ENCODE measurements at regions of chr5 and their contacts with region 1.

Region 1: DNA sequence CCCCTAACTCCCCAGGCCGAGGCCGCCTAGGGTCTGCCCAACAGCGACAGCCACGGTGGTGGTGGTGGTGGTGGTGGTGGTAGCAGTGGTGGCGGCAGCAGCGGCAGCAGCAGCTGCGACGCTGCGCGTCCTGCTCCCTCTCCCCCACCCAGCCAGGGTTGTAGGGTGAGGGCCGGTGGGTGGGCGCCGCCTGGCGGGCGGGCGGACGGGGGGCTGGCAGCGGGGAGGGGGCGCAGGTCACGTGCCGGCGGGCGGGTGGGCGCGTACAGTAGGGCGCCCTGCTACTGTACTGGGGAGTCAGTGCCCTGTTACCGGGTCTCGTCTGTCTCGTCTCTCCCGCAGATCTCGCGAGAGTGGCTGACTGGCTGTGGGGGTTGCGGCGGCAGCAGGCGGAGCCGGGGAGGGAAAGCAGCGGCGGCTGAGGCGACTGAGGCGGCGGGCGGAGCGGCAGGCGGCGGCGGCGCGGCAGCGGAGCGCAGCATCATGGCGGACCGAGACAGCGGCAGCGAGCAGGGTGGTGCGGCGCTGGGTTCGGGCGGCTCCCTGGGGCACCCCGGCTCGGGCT is at the start of gene PURA:
- DNase-seq: peak; percentile 99
- H3K4me3 Mint-ChIP-seq: peak within 1 kb of the TSS; percentile 92
- H3K27ac Mint-ChIP-seq: peak within 1 kb of the TSS; percentile 96
- H3K4me1 Mint-ChIP-seq: peaks cover 58% of the 10 kb centered on the region
- H3K27me3 Mint-ChIP-seq: peaks cover 34% of the 10 kb centered on the region
- total RNA-seq, gene PURA: 11.1 and 12.0 TPM in 2 replicates

Region 2: DNA sequence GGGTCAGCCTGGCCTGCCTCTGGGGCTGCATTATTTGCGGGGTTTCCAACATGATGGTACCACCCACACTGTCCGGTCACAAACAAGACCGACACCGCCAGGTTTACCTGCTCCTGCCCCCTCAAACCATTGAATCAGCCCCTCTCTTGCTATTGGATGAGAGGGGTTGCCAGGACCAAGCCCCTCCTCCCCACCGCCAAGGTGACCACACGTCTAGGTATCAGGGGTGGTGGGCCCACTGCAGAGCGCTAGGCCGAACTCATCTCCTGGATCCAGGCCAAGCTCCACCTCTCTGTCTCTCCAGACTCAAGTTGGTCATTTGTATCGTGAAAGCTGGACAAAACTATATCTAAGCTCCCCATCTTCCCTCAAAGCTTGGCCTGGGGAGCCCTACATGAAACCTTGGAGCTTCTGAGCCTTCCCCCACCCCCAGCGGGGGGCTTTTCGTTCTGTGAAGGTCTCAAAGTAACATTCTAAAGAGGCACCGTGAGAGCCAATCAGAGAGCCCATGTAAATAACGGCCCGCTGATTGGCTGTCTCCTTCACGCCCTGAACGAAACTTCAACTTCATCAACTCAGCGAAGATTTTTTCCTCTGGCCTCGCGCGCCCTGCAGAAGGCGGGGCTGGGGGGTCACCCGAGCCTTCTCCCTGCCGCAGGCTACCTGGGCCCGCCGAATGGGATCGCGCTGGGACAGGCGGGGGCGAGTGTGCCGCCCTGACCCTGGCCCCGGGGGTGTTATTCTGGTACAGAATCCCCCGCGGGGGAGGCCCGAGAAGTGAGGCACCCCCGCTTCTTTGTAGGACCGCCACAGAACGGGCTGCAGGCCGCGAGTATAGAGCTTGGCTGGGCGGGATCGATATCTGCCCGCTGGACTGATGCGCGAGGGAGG is 367.7 kb before region 1 on chr5:
- intact Hi-C with region 1: loop called (anchors 10 kb)
- DNase-seq: peak; percentile 76
- H3K4me3 Mint-ChIP-seq: peak overlapping the region; percentile 82
- H3K27ac Mint-ChIP-seq: no peak overlapping the region
- H3K4me1 Mint-ChIP-seq: peaks cover 29% of the 10 kb centered on the region
- H3K27me3 Mint-ChIP-seq: peaks cover 39% of the 10 kb centered on the region

Region 3: DNA sequence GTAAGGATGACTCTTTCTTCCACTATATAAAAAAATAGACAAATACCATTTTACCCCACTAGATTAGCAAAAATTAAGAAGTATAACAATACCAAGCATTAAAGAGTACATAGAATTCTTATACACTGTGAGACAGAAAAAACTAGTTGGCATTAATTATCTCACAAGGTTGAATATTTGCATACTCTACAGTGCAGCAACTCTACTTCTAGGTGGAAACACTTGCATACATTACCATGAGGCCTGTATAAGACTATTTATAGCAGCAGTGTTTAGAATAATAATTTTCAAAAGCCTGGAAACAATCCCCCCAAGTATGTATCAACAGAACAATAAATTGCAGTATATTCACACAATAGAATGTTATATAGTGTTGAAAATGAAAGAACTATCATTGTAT is 18.9 kb before region 1 on chr5:
- intact Hi-C with region 1: no loop called
- DNase-seq: no peak
- H3K4me3 Mint-ChIP-seq: no peak overlapping the region
- H3K27ac Mint-ChIP-seq: no peak overlapping the region
- H3K4me1 Mint-ChIP-seq: no peaks in the 10 kb centered on the region
- H3K27me3 Mint-ChIP-seq: peaks cover 30% of the 10 kb centered on the region

Region 4: GRCh38 chr5:140131967-140132409 is 18.2 kb after region 1 on chr5:
- intact Hi-C with region 1: loop called (anchors 2 kb)
- DNase-seq: peak; percentile 62
- H3K4me3 Mint-ChIP-seq: no peak overlapping the region
- H3K27ac Mint-ChIP-seq: no peak overlapping the region
- H3K4me1 Mint-ChIP-seq: peaks cover 24% of the 10 kb centered on the region
- H3K27me3 Mint-ChIP-seq: peaks cover 3% of the 10 kb centered on the region

Region 5: DNA sequence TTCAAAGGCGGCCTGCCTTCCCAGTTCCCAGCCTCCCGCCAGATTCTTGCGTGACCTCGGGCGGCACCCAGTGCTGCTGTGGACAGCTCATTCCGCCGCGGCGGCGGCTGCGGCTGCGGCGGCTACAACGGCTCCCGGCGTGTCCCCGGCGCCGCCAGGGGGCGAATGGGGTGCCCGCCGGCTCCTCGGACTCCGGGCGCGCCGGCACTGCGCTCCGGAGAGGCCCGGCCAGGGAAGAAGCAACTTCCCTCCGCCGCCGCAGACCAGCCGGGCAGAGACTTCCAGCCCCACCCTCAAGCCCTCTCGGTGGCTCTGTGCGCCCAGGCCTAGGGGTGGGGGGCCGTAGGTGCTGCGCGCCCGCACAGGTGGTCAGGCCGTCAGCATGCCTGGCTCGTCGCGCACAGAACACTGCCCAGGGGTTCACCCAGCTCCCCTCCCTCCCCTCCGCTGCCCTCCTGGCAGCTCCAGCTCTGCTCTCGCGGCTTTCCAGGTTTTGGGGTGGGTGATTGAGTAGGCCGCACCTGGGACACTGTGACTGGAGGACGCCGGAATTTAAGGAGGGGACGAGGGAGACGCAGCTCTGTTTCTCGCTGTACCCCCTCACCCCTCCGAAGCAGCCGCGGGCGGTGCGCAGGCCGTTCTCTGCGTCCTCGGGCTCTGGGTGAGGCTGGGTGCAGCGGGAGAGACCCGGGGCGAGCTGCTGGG is 32.2 kb after region 1 on chr5:
- intact Hi-C with region 1: loop called (anchors 2 kb)
- DNase-seq: peak; percentile 85
- H3K4me3 Mint-ChIP-seq: no peak overlapping the region
- H3K27ac Mint-ChIP-seq: no peak overlapping the region
- H3K4me1 Mint-ChIP-seq: peaks cover 8% of the 10 kb centered on the region
- H3K27me3 Mint-ChIP-seq: peaks cover 43% of the 10 kb centered on the region

Region 6: DNA sequence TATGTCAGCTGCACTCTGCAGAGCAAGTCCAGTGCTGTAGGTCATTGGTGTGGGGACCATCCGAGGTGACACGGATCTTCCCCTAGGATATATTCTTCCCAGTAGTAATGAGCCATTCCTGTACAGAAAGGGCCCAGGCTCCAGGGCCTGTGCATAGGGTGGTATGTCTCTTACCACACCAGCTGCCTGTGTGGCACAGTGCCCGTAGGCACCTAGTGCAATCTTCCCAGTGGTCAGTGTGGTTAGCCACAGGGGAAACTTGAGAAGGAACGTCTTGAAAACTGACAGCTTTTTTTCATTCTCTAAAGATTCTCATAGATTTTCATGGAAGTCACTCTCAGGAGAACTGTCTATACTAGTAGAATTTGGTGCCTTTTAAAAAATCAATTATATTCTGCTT is 101.0 kb after region 1 on chr5:
- intact Hi-C with region 1: no loop called
- DNase-seq: no peak
- H3K4me3 Mint-ChIP-seq: no peak overlapping the region
- H3K27ac Mint-ChIP-seq: no peak overlapping the region
- H3K4me1 Mint-ChIP-seq: peaks cover 6% of the 10 kb centered on the region
- H3K27me3 Mint-ChIP-seq: no peaks in the 10 kb centered on the region

Region 7: GRCh38 chr5:140557136-140557805 is 443.5 kb after region 1 on chr5 and contains the start of gene SRA1:
- intact Hi-C with region 1: loop called (anchors 5 kb)
- DNase-seq: peak; percentile 98
- H3K4me3 Mint-ChIP-seq: peak within 1 kb of the TSS; percentile 84
- H3K27ac Mint-ChIP-seq: peak within 1 kb of the TSS; percentile 82
- H3K4me1 Mint-ChIP-seq: peaks cover 47% of the 10 kb centered on the region
- H3K27me3 Mint-ChIP-seq: no peaks in the 10 kb centered on the region
- total RNA-seq, gene SRA1: 53.8 and 54.9 TPM in 2 replicates

Region 8: GRCh38 chr5:140700177-140701144 is 586.7 kb after region 1 on chr5 and contains the start of gene ZMAT2:
- intact Hi-C with region 1: loop called (anchors 10 kb)
- DNase-seq: peak; percentile 98
- H3K4me3 Mint-ChIP-seq: peak within 1 kb of the TSS; percentile 99
- H3K27ac Mint-ChIP-seq: peak within 1 kb of the TSS; percentile 96
- H3K4me1 Mint-ChIP-seq: peaks cover 24% of the 10 kb centered on the region
- H3K27me3 Mint-ChIP-seq: no peaks in the 10 kb centered on the region
- total RNA-seq, gene ZMAT2: 67.1 and 67.2 TPM in 2 replicates

Measured in activated CD4-positive, alpha-beta T cell treated with anti-CD3 and anti-CD28 coated beads, Interleukin-2, amount 10 ng/mL, durations not matched to agents 24 days and 14 days (primary cell).